CD4-positive, alpha-beta T cell (primary cell): ENCODE measurements at regions of chr19 and their contacts with region 1.

Region 1: GRCh38 chr19:18408053-18408476 is 10.6 kb upstream of the LRRC25 start:
- DNase-seq: peak in 2 of 14 experiments; percentile 43 to 51
- ATAC-seq: no peak
- H3K4me3 ChIP-seq: no peak overlapping the region
- H3K4me3 Mint-ChIP-seq: no peak overlapping the region
- H3K27ac ChIP-seq: no peak overlapping the region
- H3K27ac Mint-ChIP-seq: no peak overlapping the region
- H3K4me1 ChIP-seq: peaks cover 6% of the 10 kb centered on the region
- H3K4me1 Mint-ChIP-seq: peaks cover 5% of the 10 kb centered on the region
- H3K27me3 ChIP-seq: no peaks in the 10 kb centered on the region
- H3K27me3 Mint-ChIP-seq: peaks cover 10% of the 10 kb centered on the region
- CTCF ChIP-seq: peak; percentile 26

Region 2: GRCh38 chr19:18160971-18161635 is 247.0 kb before region 1 on chr19:
- CTCF ChIA-PET with region 1: no interaction called
- POLR2A ChIA-PET with region 1: no interaction called
- intact Hi-C with region 1: loop called in 1 of 2 experiments (anchors 1 kb)
- DNase-seq: peak; percentile 58 to 92 (median 82)
- ATAC-seq: peak; percentile 99
- H3K4me3 ChIP-seq: peak overlapping the region; percentile 20
- H3K4me3 Mint-ChIP-seq: no peak overlapping the region
- H3K27ac ChIP-seq: no peak overlapping the region
- H3K27ac Mint-ChIP-seq: no peak overlapping the region
- H3K4me1 ChIP-seq: peaks cover 21% of the 10 kb centered on the region
- H3K4me1 Mint-ChIP-seq: peaks cover 12% of the 10 kb centered on the region
- H3K27me3 ChIP-seq: no peaks in the 10 kb centered on the region
- H3K27me3 Mint-ChIP-seq: no peaks in the 10 kb centered on the region
- CTCF ChIP-seq: peak; percentile 53

Region 3: DNA sequence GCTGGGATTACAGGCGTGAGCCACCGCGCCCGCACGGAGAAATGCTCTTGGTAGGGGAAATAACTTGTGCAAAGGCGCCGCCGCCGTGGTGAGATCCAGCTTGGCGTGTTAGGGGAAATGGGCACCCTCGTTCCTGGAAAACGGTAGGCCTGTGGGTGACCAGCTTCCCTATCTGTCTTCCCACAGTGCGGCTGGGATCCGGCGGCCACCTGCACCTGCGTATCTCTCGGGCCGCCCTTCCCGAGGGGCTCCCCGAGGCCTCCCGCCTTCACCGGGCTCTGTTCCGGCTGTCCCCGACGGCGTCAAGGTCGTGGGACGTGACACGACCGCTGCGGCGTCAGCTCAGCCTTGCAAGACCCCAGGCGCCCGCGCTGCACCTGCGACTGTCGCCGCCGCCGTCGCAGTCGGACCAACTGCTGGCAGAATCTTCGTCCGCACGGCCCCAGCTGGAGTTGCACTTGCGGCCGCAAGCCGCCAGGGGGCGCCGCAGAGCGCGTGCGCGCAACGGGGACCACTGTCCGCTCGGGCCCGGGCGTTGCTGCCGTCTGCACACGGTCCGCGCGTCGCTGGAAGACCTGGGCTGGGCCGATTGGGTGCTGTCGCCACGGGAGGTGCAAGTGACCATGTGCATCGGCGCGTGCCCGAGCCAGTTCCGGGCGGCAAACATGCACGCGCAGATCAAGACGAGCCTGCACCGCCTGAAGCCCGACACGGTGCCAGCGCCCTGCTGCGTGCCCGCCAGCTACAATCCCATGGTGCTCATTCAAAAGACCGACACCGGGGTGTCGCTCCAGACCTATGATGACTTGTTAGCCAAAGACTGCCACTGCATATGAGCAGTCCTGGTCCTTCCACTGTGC is 19.7 kb before region 1 on chr19:
- CTCF ChIA-PET with region 1: interaction called, 53 read pairs
- POLR2A ChIA-PET with region 1: interaction called, 8 read pairs
- intact Hi-C with region 1: loop called (anchors 1 kb)
- DNase-seq: peak; percentile 51 to 89 (median 72)
- ATAC-seq: peak; percentile 85
- H3K4me3 ChIP-seq: peak overlapping the region; percentile 47
- H3K4me3 Mint-ChIP-seq: peak overlapping the region; percentile 72
- H3K27ac ChIP-seq: no peak overlapping the region
- H3K27ac Mint-ChIP-seq: no peak overlapping the region
- H3K4me1 ChIP-seq: peaks cover 14% of the 10 kb centered on the region
- H3K4me1 Mint-ChIP-seq: peaks cover 12% of the 10 kb centered on the region
- H3K27me3 ChIP-seq: peaks cover 42 to 43% of the 10 kb centered on the region in 2 experiments
- H3K27me3 Mint-ChIP-seq: peaks cover 66% of the 10 kb centered on the region
- CTCF ChIP-seq: peak; percentile 100

Region 4: DNA sequence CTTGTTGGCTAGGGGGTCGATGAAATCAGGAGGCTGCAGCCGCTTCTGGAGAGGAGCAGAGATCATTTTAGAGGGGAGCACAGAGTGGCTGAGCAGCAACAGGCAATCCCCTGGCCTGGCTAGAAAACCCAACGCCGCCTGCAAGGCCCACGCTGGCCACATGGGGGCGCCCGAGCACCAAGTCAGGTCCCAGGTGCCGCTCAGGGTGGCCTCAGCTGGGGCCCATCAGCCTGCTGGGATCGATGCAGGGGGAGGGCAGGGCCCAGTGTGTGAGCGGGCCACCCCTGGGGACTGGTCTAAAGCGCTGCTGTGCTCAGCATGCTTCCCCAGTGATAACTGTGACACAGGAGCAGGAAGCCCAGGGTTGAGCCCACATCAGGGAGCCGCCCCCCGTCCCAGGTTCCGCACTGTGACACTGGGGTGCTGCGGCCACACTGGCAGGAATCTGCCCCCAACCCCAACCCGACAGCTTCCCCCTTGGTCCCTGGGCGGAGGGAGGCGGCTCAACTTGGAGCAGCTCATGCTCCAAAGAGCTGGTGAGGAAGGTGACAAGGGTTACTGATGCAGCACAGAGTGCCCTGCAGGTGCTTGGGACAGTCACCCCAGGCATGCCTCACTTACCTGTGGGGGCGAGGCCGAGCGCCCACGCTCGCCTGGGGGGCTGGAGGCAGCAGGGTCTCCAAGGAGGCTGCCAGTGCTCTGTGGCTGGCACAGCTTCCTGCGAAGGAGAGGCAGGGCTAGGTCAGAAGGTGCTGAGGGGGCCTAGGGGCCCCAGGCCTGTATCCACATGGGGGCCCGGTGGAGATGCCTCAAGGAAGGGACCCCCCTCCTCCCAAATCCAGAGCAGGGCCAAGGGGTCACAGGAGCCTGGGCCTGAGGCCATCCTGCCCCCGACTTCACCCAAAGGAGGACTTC is 43.1 kb after region 1 on chr19:
- CTCF ChIA-PET with region 1: no interaction called
- POLR2A ChIA-PET with region 1: no interaction called
- intact Hi-C with region 1: no loop called
- DNase-seq: peak; percentile 75 to 93 (median 86)
- ATAC-seq: peak; percentile 94
- H3K4me3 ChIP-seq: no peak overlapping the region
- H3K4me3 Mint-ChIP-seq: no peak overlapping the region
- H3K27ac ChIP-seq: no peak overlapping the region
- H3K27ac Mint-ChIP-seq: no peak overlapping the region
- H3K4me1 ChIP-seq: peaks cover 11% of the 10 kb centered on the region
- H3K4me1 Mint-ChIP-seq: peaks cover 8% of the 10 kb centered on the region
- H3K27me3 ChIP-seq: no peaks in the 10 kb centered on the region
- H3K27me3 Mint-ChIP-seq: no peaks in the 10 kb centered on the region
- CTCF ChIP-seq: peak; percentile 94